ENCODE measurements at regions of chr17 and their contacts with region 1.

Region 1: GRCh38 chr17:19433727-19434340 is 22.8 kb downstream of the RNF112 start:
- DNase-seq: no peak

Region 2: DNA sequence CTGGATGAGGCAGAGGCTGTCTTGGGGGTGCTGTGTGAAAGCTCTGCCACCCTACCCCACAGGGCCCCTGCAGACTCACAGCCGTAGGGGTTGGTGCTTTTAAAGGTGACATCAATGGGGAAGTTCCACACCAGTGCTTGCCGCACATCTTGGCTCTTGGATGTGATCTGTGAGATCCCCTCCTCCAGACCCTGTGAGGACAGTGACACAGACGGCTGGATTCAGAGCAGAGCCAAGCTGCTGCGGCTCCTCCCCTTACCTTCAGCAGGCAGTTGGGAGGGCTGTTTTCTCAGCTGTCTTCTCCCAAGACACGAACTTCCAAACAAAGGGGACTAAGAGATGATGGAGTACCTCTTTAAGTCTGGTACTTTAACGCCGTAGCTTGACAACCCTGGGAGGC is 76.1 kb before region 1 on chr17:
- intact Hi-C with region 1: loop called (anchors 10 kb)
- DNase-seq: peak in 4 of 42 donors; percentile 6 to 49 (median 18)

Region 3: DNA sequence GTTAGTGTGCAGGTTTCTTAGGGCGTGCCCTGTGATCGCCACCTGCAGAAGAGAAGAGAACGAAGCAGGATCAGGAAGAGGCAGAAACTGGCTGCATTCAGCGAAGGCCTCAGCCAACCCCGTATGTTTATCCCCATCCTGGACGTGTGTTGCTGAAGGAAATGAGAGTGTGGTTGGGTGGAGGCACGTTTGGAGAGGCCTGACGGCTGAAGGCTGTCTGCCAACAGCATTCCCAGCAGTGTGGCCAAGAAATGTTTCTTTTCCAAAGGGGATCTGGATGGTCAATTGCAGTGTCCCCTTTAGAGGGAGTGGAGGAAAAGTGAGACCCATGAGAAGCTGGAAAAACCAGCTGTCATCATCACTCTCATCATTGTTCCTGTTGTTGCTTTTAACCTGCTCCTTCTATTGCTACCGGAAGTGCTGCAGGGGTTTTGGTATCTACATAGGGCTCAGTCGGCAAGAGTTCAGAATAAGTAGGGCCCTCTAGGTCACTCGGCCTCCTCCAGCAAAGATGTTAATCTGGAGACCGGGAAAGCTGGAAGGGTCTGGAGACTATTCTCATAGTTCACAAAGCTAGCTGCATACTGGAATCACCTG is 53.3 kb after region 1 on chr17:
- intact Hi-C with region 1: no loop called
- DNase-seq: peak in 2 of 42 donors; percentile 16 to 25